Endothelial cell of umbilical vein (primary cell): ENCODE measurements at regions of chrX and their contacts with region 1.

Region 1: GRCh38 chrX:31266172-31267076 is 194.6 kb upstream of the FTHL17 start:
- DNase-seq: peak; percentile 53
- H3K4me3 ChIP-seq: peak overlapping the region; percentile 57 to 81 (median 74)
- H3K27ac ChIP-seq: peak overlapping the region; percentile 37
- H3K4me1 ChIP-seq: no peaks in the 10 kb centered on the region
- H3K27me3 ChIP-seq: no peaks in the 10 kb centered on the region
- CTCF ChIP-seq: no peak
- POLR2A ChIP-seq: no peak

Region 2: DNA sequence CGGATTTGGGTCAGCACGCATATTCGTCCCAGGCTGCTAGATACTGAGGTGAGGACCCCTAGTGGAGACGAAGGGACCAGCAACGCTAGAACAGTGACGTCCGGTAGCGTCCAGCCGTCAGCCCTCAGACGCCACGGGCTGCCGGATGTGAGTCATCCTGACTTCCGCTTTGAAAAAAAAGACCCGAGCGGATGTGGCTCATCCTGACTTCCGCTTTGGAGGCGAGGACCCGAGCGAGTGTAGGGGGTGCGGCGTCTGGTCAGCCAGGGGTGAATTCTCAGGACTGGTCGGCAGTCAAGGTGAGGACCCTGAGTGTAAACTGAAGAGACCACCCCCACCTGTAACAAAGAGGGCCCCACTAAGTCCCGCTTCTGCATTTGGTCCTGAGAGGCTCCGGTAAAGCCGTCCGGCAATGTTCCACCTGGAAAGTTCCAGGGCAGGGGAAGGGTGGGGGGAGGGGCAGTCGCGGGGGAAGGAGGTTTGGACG is 1051.0 kb before region 1 on chrX and contains the start of gene MAGEB2:
- CTCF ChIA-PET with region 1: no interaction called
- POLR2A ChIA-PET with region 1: no interaction called
- dilution Hi-C with region 1: no loop called
- intact Hi-C with region 1: no loop called
- DNase-seq: no peak
- H3K4me3 ChIP-seq: no peak within 1 kb of the TSS
- H3K27ac ChIP-seq: no peak within 1 kb of the TSS
- H3K4me1 ChIP-seq: no peaks in the 10 kb centered on the region
- H3K27me3 ChIP-seq: no peaks in the 10 kb centered on the region
- CTCF ChIP-seq: no peak
- POLR2A ChIP-seq: no peak
- total RNA-seq, gene MAGEB2: not detected in 2 replicates

Region 3: DNA sequence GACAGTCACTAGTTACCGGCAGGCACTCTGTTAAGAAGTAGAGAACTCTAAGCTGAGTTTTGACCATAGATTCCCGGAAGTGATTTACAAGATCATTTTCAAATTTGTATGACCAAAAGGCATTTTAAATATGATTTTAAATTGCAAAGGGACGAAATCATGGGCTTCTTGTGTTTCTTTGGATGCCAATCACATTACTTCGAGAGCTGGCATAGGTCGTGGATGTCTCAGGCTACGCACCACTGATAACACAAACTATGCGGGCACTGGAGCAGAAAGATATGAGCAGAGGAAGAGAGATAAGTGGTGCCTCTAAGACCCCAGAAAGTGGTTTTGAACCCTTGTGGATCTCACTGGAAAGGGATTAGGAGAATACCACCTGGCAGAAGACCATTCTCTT is 99.6 kb after region 1 on chrX:
- CTCF ChIA-PET with region 1: no interaction called
- POLR2A ChIA-PET with region 1: interaction called, 12 read pairs
- dilution Hi-C with region 1: no loop called
- intact Hi-C with region 1: no loop called
- DNase-seq: no peak
- H3K4me3 ChIP-seq: no peak overlapping the region
- H3K27ac ChIP-seq: no peak overlapping the region
- H3K4me1 ChIP-seq: no peaks in the 10 kb centered on the region
- H3K27me3 ChIP-seq: no peaks in the 10 kb centered on the region
- CTCF ChIP-seq: no peak
- POLR2A ChIP-seq: no peak

Region 4: DNA sequence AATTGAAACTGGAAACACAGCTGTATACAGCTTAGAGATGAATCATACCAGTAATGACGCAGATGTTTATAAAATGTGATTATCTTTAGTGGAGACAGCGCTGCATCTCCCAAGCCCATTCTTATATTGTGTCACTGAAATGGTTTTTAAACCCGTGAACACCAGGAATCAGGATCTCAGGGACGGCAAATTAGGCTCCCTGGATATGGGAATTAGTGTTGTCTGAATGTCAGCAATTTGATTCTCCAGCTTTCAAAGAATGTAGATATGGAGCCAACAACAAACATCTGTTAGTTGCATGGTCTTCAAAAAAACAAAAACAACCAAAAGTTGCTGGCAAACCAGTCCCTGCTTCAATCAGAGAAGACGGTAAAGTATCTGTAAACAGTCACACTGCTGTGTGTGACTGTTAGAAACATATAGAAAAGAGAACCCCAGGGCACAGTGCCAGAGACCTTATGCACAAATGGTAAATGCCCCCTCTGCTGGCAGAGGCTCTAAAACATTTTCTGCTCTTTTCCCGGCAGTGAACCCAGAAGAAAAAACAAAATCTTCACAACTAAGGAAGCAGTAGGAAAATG is 157.3 kb after region 1 on chrX:
- CTCF ChIA-PET with region 1: interaction called, 3 read pairs
- POLR2A ChIA-PET with region 1: no interaction called
- dilution Hi-C with region 1: no loop called
- intact Hi-C with region 1: loop called (anchors 5 kb)
- DNase-seq: peak; percentile 44
- H3K4me3 ChIP-seq: no peak overlapping the region
- H3K27ac ChIP-seq: no peak overlapping the region
- H3K4me1 ChIP-seq: no peaks in the 10 kb centered on the region
- H3K27me3 ChIP-seq: no peaks in the 10 kb centered on the region
- CTCF ChIP-seq: peak; percentile 33 to 42
- POLR2A ChIP-seq: no peak